ENCODE measurements at regions of chr1 and their contacts with region 1.

Region 1: DNA sequence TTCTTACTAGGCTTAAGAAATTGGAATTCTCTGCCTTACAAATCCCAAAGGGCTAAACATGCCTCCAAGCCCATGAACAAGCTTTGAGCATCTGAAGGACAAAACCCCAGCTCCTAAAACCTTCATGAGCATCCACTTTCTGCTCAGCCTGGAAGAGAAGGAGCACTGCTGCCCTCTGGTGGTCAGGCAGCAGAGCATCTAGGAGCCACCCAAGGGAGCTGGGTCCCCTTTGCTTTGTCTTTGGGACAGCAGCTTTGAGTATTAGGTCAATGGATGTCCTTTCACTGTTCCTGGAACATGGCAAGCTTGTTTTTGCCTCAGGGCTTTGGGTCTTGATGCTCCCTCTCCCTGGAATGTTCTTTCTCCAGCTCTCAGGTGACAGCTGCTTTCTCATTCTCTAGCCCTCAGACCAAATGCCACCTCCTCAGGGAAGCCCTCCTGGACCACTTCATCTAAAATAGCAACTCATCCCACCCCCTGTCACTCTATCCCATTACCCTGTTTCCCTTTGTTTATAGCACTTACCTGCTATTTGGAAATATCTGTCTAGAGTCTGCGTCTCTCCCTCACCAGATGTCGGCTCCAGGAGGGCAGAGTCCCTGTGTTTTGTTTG is 25.7 kb downstream of the RAB7B start:
- DNase-seq: peak; percentile 82
- H3K4me3 Mint-ChIP-seq: no peak overlapping the region
- H3K27ac Mint-ChIP-seq: no peak overlapping the region
- H3K4me1 Mint-ChIP-seq: no peaks in the 10 kb centered on the region
- H3K27me3 Mint-ChIP-seq: peaks cover 2% of the 10 kb centered on the region

Region 2: GRCh38 chr1:205711104-205712020 is 266.1 kb before region 1 on chr1:
- CTCF ChIA-PET with region 1: interaction called, 13 read pairs
- POLR2A ChIA-PET with region 1: no interaction called
- intact Hi-C with region 1: no loop called
- DNase-seq: peak; percentile 57
- H3K4me3 Mint-ChIP-seq: no peak overlapping the region
- H3K27ac Mint-ChIP-seq: peak overlapping the region; percentile 50
- H3K4me1 Mint-ChIP-seq: peaks cover 9% of the 10 kb centered on the region
- H3K27me3 Mint-ChIP-seq: no peaks in the 10 kb centered on the region

Region 3: DNA sequence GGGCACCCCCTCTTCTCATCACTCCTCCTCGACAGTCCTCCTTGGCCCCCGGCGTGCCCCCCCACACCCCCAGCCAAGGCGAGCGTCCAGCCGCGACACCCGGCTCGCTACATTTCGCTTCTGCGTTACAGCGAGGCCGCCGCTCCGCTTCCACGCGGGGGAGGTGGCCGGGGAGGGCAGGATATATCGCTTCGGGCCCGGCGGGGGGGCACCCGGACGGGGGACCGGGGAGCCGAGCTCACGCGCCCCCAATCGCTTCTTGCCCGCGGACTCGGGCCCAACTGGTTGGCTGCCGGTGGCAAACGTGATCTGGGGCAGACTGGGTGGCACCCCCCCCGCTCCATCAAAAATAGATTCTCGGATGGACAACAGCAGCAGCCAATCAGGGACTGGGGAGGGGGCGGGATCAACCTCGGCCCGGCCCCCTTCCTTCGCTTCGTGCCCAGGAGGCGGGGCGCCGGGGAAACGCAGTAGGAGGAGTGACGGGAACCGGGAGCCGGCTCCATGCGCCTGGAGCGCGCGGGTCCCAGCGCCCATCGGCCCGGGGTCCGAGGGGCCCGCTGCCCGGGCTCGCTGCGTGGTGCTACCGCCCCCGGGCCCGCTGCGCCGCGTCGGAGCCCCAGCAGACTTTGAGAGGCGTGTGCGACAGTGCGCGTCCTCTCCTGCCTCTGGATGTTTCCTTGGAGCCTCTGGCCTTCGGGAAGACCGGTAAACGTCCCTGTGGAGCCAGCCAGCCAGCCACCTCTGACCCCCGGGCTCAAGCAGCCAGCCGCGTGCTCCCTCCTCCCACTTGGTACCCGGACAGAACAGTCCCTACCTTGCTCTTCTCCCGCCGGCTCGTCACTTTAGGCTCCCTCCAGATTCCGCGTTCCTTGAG is 164.4 kb before region 1 on chr1 and contains the start of gene SLC41A1:
- CTCF ChIA-PET with region 1: interaction called, 13 read pairs
- POLR2A ChIA-PET with region 1: no interaction called
- intact Hi-C with region 1: no loop called
- DNase-seq: peak; percentile 94
- H3K4me3 Mint-ChIP-seq: peak within 1 kb of the TSS; percentile 89
- H3K27ac Mint-ChIP-seq: peak within 1 kb of the TSS; percentile 80
- H3K4me1 Mint-ChIP-seq: peaks cover 52% of the 10 kb centered on the region
- H3K27me3 Mint-ChIP-seq: no peaks in the 10 kb centered on the region
- total RNA-seq, gene SLC41A1: 34.9 to 35.0 TPM

Region 4: DNA sequence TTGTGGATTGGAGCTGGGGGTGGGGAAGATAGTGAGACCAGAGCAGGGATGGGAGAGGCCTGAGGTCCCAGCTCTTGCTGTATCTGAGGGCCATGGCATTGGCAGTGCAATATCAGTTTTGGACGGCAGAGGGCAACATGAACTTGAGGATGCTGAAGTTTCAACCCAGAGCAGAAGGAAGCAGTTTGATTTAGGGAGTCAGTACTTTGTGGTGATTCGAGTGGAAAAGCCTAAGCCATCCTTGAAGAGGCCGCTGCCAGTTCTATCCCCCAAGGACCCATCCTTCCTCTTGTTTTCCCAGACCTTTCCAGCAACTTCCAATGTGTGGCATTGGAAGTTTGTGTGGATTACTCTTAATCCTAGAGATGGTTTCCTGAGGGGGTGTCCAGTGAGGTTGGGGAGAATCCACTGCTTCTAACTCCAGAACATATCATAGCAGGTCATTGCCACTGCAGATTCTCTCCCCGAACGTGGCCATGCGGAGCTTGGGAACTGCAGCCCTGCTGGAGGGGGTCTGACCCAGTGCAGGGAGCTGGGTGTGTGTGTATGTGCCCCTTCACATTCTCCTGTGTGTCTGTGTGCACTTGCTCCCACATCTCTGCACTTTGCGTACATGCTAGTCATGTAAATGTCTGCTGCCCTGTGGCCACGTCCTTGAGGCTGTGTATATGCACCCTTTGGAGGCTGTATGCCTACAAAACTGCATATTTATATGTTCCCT is 58.3 kb before region 1 on chr1:
- CTCF ChIA-PET with region 1: interaction called, 248 read pairs
- POLR2A ChIA-PET with region 1: interaction called, 3 read pairs
- intact Hi-C with region 1: loop called (anchors 1 kb)
- DNase-seq: peak; percentile 84
- H3K4me3 Mint-ChIP-seq: no peak overlapping the region
- H3K27ac Mint-ChIP-seq: no peak overlapping the region
- H3K4me1 Mint-ChIP-seq: no peaks in the 10 kb centered on the region
- H3K27me3 Mint-ChIP-seq: no peaks in the 10 kb centered on the region

Region 5: DNA sequence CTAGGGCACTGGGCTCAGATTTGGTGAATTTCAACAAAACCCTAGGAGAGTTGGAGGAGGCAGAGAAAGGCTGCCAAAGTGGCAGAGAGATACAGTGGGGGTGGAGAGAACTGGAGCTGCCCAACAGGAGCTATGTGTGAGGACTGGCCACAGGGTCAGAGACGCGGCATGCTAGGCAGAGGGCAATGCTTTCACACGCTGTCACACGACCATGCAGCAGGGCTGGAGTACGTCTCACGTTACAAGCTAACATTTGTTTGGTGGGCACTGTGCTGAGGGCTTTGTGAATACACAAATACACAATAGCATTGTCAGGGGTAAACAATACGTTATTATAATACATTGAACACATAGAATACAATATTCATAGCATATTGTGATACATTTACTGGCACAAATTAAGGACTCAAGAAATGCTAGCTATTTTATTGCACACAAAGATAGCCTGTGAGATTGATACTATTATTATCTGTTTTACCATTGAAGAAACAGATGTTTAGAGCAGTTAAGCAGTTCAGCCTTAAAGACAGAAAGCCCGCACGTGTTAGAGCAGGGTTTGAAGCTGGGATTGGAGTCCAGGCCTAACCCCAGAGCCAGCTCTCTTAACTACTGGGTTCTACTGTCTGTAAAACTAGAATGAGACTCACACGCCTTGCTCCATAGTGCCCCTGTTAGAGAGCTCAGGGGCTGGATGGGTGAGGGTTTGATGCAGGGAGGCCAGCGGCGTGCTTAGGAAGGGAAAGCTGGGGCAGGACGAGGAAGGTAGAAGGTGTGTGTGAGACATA is 21.1 kb after region 1 on chr1:
- CTCF ChIA-PET with region 1: interaction called, 23 read pairs
- POLR2A ChIA-PET with region 1: no interaction called
- intact Hi-C with region 1: no loop called
- DNase-seq: peak; percentile 3
- H3K4me3 Mint-ChIP-seq: no peak overlapping the region
- H3K27ac Mint-ChIP-seq: no peak overlapping the region
- H3K4me1 Mint-ChIP-seq: peaks cover 20% of the 10 kb centered on the region
- H3K27me3 Mint-ChIP-seq: peaks cover 10% of the 10 kb centered on the region

Region 6: DNA sequence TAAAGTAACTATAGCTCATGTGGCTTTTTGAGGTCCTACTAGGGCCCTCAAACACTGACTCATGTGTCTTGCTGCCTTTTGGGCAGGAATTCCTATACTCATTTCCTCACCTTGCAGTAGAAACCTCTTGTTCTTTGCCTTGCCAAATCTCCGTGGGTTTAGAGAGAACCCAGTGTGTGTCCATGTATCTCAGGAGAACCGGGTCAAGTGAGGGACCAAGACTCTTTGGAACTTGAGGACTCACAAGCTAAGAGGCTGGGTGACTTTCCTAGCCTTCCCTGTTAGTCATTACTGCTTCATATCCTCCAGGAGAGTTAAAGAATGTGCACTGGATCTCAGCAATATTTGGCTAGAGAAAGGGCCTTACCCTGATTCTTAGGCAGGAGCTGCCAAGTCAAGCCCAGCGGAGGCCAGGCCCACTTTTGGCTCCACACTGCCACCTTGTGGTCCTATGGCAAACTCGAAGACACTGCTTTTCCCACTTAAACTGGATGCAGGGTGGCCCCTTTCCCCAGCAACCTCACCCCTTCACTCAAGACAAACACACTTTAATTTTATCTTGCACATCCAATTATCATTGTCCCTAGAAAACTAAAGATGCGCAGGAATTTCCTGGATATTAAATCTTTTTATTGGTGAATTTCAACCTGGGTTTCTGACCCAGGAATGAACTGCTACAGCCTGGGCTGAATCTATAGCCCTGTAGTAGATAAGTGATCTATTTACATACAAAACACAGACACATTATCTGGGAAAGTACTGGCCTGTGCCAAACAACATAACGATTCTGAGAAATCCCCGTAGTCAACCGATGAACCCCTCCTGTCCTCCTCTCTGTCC is 129.0 kb after region 1 on chr1:
- CTCF ChIA-PET with region 1: interaction called, 97 read pairs
- POLR2A ChIA-PET with region 1: no interaction called
- intact Hi-C with region 1: no loop called
- DNase-seq: peak; percentile 85
- H3K4me3 Mint-ChIP-seq: no peak overlapping the region
- H3K27ac Mint-ChIP-seq: no peak overlapping the region
- H3K4me1 Mint-ChIP-seq: no peaks in the 10 kb centered on the region
- H3K27me3 Mint-ChIP-seq: no peaks in the 10 kb centered on the region